Activated T-helper 2 cell treated with anti-CD3 and anti-CD28 coated beads, Interferon-gamma antibody, Interleukin-2, Interleukin-4, amounts not matched to agents 10 μg/mL and 5 μg/mL and 100 μg/mL, durations not matched to agents 14 hours and 24 hours and 36 hours (primary cell): ENCODE measurements at regions of chr5 and their contacts with region 1.

Region 1: GRCh38 chr5:43120720-43121564 is at the start of gene ZNF131:
- DNase-seq: peak; percentile 96
- H3K4me3 Mint-ChIP-seq: peak within 1 kb of the TSS; percentile 97
- H3K27ac Mint-ChIP-seq: peak within 1 kb of the TSS; percentile 99
- H3K4me1 Mint-ChIP-seq: peaks cover 31% of the 10 kb centered on the region
- H3K27me3 Mint-ChIP-seq: no peaks in the 10 kb centered on the region
- total RNA-seq, gene ZNF131: 37.4 and 40.3 TPM in 2 replicates

Region 2: GRCh38 chr5:41903892-41904799 is 1216.8 kb before region 1 on chr5 and contains the start of gene RIMOC1:
- intact Hi-C with region 1: loop called (anchors 1 kb)
- DNase-seq: peak; percentile 98
- H3K4me3 Mint-ChIP-seq: peak within 1 kb of the TSS; percentile 97
- H3K27ac Mint-ChIP-seq: peak within 1 kb of the TSS; percentile 97
- H3K4me1 Mint-ChIP-seq: peaks cover 49% of the 10 kb centered on the region
- H3K27me3 Mint-ChIP-seq: no peaks in the 10 kb centered on the region
- total RNA-seq, gene RIMOC1: 26.6 and 28.7 TPM in 2 replicates

Region 3: DNA sequence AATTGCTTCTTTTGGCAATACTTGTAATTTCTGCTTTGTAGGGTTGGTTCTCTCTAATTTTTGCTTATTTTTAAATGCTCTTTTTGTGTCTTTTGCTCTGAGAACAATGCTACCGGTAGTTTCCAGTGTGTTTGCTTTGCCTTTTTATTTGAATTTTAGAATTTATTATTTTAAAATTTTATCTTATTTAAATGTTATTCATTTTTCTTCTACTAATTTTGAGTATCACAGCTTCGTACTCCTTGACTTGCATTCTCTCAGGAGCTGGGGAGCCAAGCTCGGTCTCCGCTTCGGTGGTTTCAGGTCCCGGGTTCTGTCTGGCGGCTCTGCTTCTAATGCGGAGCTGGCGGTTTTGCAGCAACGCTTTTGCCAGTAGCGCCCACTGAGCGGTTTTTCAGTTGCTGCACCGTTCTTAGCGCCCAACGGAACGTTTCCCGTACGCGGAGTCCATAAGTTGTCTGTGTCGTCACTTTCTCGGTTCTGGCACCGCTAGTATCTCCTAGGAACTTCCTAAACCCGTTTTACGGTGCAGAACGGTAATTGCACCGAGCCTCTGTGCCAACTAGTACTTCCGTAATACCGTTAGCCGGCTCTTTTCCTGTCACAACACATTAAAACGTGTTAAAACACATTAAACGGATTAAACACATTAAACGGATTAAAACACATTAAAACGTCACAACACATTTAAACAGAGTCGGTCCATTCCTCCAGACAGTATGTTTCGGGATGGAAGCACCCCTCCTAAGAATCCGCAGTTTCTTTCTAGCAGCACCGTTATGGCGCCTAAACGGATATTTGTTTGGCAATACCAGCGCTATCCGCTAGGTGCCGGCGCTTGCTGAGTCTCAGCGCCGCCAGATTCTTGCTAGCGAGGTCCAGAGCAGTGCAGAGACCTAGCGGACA is 126.4 kb before region 1 on chr5:
- intact Hi-C with region 1: loop called (anchors 5 kb)
- DNase-seq: peak; percentile 86
- H3K4me3 Mint-ChIP-seq: peak overlapping the region; percentile 100
- H3K27ac Mint-ChIP-seq: peak overlapping the region; percentile 100
- H3K4me1 Mint-ChIP-seq: peaks cover 32% of the 10 kb centered on the region
- H3K27me3 Mint-ChIP-seq: no peaks in the 10 kb centered on the region

Region 4: DNA sequence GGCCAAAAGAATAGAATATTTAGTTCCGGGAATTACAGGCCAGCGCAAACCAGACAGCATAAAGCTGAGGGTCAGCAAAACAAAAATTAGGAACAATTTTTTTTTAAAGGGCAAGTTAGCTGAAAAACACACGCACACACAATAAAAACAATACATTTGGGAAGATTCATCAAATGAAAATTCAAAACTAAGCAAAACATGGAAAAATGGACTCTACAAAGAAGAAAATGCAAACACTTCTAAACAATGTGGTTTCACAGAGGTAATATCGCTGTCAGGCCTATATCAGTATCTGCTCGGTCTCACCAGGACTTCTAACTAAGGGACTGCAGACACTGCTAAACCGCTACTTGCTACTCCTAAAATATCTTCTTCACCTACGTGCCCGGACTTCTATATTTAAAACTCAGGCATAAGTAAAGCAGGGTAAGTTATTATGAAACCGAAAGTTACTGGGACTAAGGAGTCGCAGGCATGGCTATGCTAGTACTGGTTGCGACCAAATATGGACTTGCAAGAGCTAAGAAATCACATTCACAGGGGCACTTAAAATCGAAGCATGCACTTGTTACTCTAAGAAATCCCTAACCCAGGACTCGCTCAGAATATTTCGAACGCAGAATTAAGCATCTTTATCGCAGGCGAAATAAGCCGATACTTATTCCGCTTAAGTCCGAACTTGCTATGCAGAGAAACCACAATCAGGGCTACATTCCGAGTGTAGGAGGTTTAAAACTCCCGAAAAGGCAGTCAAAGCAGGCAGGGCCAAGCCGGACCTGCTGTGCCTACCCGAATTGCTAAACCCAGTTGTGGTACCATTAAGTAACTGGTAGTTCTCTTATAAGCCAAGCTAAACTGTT is 83.1 kb before region 1 on chr5:
- intact Hi-C with region 1: no loop called
- DNase-seq: peak; percentile 45
- H3K4me3 Mint-ChIP-seq: peak overlapping the region; percentile 80
- H3K27ac Mint-ChIP-seq: peak overlapping the region; percentile 82
- H3K4me1 Mint-ChIP-seq: peaks cover 42% of the 10 kb centered on the region
- H3K27me3 Mint-ChIP-seq: no peaks in the 10 kb centered on the region

Region 5: GRCh38 chr5:43066799-43067741 is 53.9 kb before region 1 on chr5:
- intact Hi-C with region 1: loop called (anchors 1 kb)
- DNase-seq: peak; percentile 85
- H3K4me3 Mint-ChIP-seq: peak overlapping the region; percentile 91
- H3K27ac Mint-ChIP-seq: peak overlapping the region; percentile 97
- H3K4me1 Mint-ChIP-seq: peaks cover 32% of the 10 kb centered on the region
- H3K27me3 Mint-ChIP-seq: no peaks in the 10 kb centered on the region

Region 6: DNA sequence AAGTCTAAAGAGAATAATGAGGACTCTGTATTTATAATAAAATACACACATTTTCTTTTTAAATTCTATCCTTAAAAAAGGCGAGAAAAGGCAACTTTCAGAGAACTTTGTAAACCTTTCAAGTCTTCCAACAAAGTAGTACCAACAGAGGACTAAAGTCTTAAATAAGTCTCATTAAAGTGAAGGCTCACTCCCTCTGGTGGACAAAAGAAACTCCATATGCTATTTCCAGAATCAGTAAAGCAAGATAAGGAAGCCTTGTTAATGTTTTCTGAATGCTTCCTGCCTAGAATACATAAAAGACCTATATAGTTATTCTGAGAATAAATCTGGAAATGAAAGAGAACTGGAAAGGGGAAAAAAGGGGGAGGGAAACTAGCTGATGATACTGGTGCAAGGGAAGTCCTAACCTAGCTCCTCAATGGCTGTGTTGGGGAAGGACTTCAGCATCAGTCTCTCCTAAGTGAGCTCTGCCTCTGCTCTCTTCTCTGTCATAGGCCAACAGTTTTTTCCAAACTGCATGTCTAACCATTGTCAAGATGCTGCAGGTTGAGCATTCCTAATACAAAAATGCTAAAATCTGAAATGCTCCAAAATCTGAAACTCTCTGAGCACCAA is 185.1 kb after region 1 on chr5:
- intact Hi-C with region 1: loop called (anchors 2 kb)
- DNase-seq: no peak
- H3K4me3 Mint-ChIP-seq: peak overlapping the region; percentile 10
- H3K27ac Mint-ChIP-seq: peak overlapping the region; percentile 68
- H3K4me1 Mint-ChIP-seq: peaks cover 84% of the 10 kb centered on the region
- H3K27me3 Mint-ChIP-seq: no peaks in the 10 kb centered on the region

Region 7: GRCh38 chr5:43348207-43348606 is 227.3 kb after region 1 on chr5:
- intact Hi-C with region 1: no loop called
- DNase-seq: no peak
- H3K4me3 Mint-ChIP-seq: no peak overlapping the region
- H3K27ac Mint-ChIP-seq: no peak overlapping the region
- H3K4me1 Mint-ChIP-seq: no peaks in the 10 kb centered on the region
- H3K27me3 Mint-ChIP-seq: peaks cover 8% of the 10 kb centered on the region

Region 8: DNA sequence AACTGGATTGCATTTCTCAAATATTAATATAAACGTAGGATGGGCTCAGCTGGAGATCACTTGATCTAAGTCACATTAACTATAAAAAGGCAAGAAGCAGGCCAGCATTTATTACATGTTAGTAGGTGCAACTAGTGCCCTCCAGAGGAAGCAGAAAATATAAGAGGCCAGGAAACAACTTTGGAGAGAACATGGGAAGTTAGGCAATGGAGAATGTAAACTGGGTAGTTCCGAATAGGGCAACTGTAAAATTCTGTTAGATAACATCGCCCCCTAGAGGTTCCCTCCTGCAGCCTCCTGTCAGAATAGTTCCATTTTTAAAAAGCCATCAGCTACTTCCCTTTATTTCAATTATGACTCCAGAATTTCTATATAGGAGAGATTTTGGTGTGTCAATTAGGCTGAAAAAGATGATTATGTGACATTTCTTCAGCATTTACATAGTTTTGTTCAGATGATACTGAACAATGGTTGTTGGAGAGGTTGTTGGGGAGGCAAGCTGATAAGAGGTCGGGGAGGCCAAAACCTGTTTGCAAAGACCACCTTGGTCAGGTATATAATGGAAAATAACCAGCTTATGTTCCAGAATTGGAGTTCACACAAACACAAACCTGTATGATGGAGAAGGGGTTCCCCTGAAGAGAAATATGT is 268.9 kb after region 1 on chr5:
- intact Hi-C with region 1: loop called (anchors 5 kb)
- DNase-seq: peak; percentile 37
- H3K4me3 Mint-ChIP-seq: no peak overlapping the region
- H3K27ac Mint-ChIP-seq: no peak overlapping the region
- H3K4me1 Mint-ChIP-seq: peaks cover 20% of the 10 kb centered on the region
- H3K27me3 Mint-ChIP-seq: no peaks in the 10 kb centered on the region

Region 9: GRCh38 chr5:43514816-43515677 is 394.1 kb after region 1 on chr5 and contains the start of gene C5orf34:
- intact Hi-C with region 1: loop called (anchors 1 kb)
- DNase-seq: peak; percentile 91
- H3K4me3 Mint-ChIP-seq: peak within 1 kb of the TSS; percentile 92
- H3K27ac Mint-ChIP-seq: peak within 1 kb of the TSS; percentile 96
- H3K4me1 Mint-ChIP-seq: peaks cover 34% of the 10 kb centered on the region
- H3K27me3 Mint-ChIP-seq: no peaks in the 10 kb centered on the region
- total RNA-seq, gene C5orf34: 6.3 and 8.3 TPM in 2 replicates